ENCODE measurements at regions of chr4 and their contacts with region 1.

Region 1: GRCh38 chr4:118225511-118225910 is 127.3 kb downstream of the PRSS12 start:
- DNase-seq: no peak
- H3K4me3 ChIP-seq: no peak overlapping the region
- H3K27ac ChIP-seq: no peak overlapping the region
- H3K4me1 ChIP-seq: peaks cover 3% of the 10 kb centered on the region; the same call in 1 of the 2 replicates
- H3K27me3 ChIP-seq: no peaks in the 10 kb centered on the region

Region 2: DNA sequence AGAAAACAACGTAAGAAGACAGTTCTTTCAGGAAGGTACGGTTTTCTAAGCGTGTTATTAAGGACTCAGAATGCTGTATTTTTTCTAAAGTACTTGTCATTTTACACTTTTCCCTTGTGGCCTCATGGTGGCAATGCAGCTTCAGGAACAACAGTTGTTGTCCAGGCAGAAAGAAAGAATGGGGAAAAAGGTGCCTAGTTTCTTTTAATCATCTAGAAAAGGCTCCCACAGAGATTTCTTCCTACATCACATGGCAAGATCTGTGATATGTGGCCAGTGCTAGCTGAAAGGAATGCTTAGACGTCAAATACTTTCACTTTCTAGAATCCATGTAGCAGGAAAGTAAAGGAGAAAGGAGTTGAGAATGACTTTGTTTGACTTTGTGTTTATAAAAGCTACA is 1091.1 kb before region 1 on chr4:
- in situ Hi-C with region 1: loop called (anchors 25 kb)
- DNase-seq: peak; percentile 58
- H3K4me3 ChIP-seq: no peak overlapping the region
- H3K27ac ChIP-seq: no peak overlapping the region
- H3K4me1 ChIP-seq: 0 out of 2 replicates have a peak, but pooled peaks cover 5% of the 10 kb centered on the region
- H3K27me3 ChIP-seq: no peaks in the 10 kb centered on the region

Region 3: GRCh38 chr4:117817301-117817700 is 408.2 kb before region 1 on chr4:
- in situ Hi-C with region 1: no loop called
- DNase-seq: no peak
- H3K4me3 ChIP-seq: no peak overlapping the region
- H3K27ac ChIP-seq: no peak overlapping the region
- H3K4me1 ChIP-seq: no peaks in the 10 kb centered on the region
- H3K27me3 ChIP-seq: no peaks in the 10 kb centered on the region

Region 4: GRCh38 chr4:119314356-119314755 is 1088.8 kb after region 1 on chr4:
- in situ Hi-C with region 1: no loop called
- DNase-seq: peak; percentile 70
- H3K4me3 ChIP-seq: no peak overlapping the region
- H3K27ac ChIP-seq: no peak overlapping the region
- H3K4me1 ChIP-seq: peaks cover 15% of the 10 kb centered on the region
- H3K27me3 ChIP-seq: no peaks in the 10 kb centered on the region